Activated CD8-positive, alpha-beta T cell treated with anti-CD3 and anti-CD28 coated beads, Interleukin-2, amount 10 ng/mL, durations not matched to agents 7 days and 5 days (primary cell): ENCODE measurements at regions of chr14 and their contacts with region 1.

Region 1: GRCh38 chr14:80954687-80955299 is 628 bp upstream of the TSHR start:
- DNase-seq: peak; percentile 79
- ATAC-seq: peak; percentile 56
- H3K4me3 Mint-ChIP-seq: peak overlapping the region; percentile 78
- H3K27ac Mint-ChIP-seq: peak overlapping the region; percentile 71
- H3K4me1 Mint-ChIP-seq: peaks cover 46% of the 10 kb centered on the region
- H3K27me3 Mint-ChIP-seq: peaks cover 23% of the 10 kb centered on the region

Region 2: DNA sequence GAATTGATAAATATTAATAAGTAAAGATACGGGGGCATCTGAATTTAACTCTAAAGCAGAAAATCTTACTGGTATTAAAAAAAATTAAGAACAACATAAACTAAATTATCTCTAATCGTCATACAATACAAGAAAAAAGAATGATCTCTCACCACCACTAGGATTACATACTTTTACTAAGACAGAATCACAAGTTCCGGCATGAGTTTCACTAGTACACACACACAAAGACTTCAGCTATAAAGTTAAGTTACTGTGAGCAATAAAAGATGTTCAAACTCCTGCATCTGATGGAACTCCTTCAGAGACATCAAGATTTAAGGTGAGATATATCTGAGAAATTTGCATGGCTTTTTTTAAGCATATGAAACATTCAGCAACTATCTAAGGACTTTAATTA is 35.2 kb before region 1 on chr14:
- CTCF ChIA-PET with region 1: no interaction called
- POLR2A ChIA-PET with region 1: no interaction called
- DNase-seq: no peak
- ATAC-seq: no peak
- H3K4me3 Mint-ChIP-seq: no peak overlapping the region
- H3K27ac Mint-ChIP-seq: no peak overlapping the region
- H3K4me1 Mint-ChIP-seq: peaks cover 6% of the 10 kb centered on the region
- H3K27me3 Mint-ChIP-seq: no peaks in the 10 kb centered on the region

Region 3: GRCh38 chr14:80930836-80931389 is 23.9 kb before region 1 on chr14:
- CTCF ChIA-PET with region 1: interaction called, 11 read pairs
- POLR2A ChIA-PET with region 1: interaction called, 3 read pairs
- DNase-seq: peak; percentile 77
- ATAC-seq: peak; percentile 94
- H3K4me3 Mint-ChIP-seq: peak overlapping the region; percentile 42
- H3K27ac Mint-ChIP-seq: peak overlapping the region; percentile 77
- H3K4me1 Mint-ChIP-seq: peaks cover 71% of the 10 kb centered on the region
- H3K27me3 Mint-ChIP-seq: no peaks in the 10 kb centered on the region

Region 4: DNA sequence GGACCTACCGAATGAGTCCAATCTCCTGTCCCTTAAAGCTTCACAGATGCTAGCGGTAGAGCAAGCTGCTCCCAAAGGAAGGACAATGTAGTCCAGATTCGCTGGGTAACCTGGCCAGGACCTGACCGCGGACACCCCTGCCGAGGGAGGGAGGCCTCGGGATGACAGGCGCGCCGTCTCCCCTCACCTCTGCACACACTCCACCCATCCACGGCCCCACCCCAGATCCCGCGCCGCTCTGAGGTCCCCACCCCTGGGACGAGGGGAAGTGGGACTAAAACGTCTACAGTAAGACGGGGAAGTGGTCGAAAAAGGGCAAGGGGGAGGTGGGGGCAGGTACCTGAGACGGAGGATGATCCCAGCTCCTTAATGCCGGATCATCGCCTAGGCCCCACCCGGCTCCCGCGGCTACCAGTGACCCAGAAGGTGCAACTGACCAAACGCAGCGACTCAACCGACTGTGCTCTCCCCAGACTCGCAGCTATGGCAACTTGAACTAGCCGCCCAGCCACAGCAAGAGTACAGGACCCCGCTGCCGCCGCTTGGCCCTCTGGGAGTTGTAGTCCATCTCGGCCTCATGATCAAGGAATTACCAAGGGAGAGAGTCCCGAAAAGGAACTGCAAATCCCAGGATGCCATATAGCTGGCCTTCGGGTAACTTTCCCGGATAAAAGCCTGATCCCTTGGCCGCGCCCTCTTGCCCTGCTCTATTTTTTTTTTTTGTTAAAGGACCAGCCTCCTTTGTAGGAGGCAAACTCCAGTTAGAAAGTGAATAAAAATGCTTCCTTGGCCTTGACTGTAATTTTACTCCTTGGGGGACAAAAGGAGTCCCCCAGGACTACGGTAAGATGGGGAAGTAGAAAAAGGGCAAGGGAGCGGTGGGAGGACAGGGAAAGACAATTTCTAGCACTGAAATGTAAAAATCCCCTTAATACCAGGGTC is 13.3 kb before region 1 on chr14 and contains the start of gene CEP128:
- CTCF ChIA-PET with region 1: interaction called, 15 read pairs
- POLR2A ChIA-PET with region 1: interaction called, 8 read pairs
- DNase-seq: peak; percentile 93
- ATAC-seq: peak; percentile 97
- H3K4me3 Mint-ChIP-seq: peak within 1 kb of the TSS; percentile 92
- H3K27ac Mint-ChIP-seq: peak within 1 kb of the TSS; percentile 87
- H3K4me1 Mint-ChIP-seq: peaks cover 29% of the 10 kb centered on the region
- H3K27me3 Mint-ChIP-seq: no peaks in the 10 kb centered on the region
- total RNA-seq, gene CEP128: 32.9 to 35.8 TPM

Region 5: DNA sequence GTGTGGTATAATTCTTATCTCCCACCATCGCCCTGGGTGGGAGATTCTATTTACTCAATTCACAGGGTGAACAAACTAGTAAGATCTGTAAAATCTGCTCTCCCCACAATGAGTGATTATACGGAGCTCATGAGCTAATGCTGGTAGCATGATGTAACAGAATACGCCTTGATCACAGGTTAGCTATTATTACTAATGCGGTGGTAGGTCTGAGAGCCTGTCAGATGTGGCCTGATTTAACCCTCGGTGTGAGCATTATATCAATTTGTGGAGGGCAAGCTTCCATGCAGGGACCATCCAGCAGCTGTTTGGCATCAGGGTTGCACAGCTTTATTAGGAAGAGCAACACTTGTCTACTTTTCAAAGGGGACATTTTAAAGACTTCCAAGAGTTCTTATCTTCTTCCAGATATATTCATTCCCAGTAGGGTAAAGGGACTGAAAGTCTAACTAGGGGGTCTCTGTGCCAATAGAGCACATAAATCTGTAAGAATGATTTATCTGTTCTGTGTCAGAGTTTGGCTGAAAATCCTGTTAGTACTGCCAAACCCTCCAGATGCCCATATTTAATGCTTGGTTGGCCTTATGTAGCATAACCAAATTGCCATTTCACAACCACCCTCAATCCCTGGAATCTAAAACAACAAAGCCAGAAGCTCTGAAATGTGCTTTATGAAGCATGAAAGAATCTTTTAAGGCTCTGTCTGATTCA is 19.3 kb after region 1 on chr14:
- CTCF ChIA-PET with region 1: interaction called, 76 read pairs
- POLR2A ChIA-PET with region 1: interaction called, 3 read pairs
- DNase-seq: no peak
- ATAC-seq: peak; percentile 35
- H3K4me3 Mint-ChIP-seq: no peak overlapping the region
- H3K27ac Mint-ChIP-seq: no peak overlapping the region
- H3K4me1 Mint-ChIP-seq: peaks cover 28% of the 10 kb centered on the region
- H3K27me3 Mint-ChIP-seq: peaks cover 33% of the 10 kb centered on the region

Region 6: GRCh38 chr14:80996049-80996901 is 41.5 kb after region 1 on chr14:
- CTCF ChIA-PET with region 1: interaction called, 13 read pairs
- POLR2A ChIA-PET with region 1: no interaction called
- DNase-seq: peak; percentile 32
- ATAC-seq: peak; percentile 72
- H3K4me3 Mint-ChIP-seq: no peak overlapping the region
- H3K27ac Mint-ChIP-seq: no peak overlapping the region
- H3K4me1 Mint-ChIP-seq: no peaks in the 10 kb centered on the region
- H3K27me3 Mint-ChIP-seq: peaks cover 26% of the 10 kb centered on the region